ENCODE measurements at regions of chr7 and their contacts with region 1.

Region 1: GRCh38 chr7:35891004-35891830 is 90.4 kb downstream of the SEPTIN7 start:
- DNase-seq: no peak
- CTCF ChIP-seq: no peak

Region 2: GRCh38 chr7:35906191-35906908 is 15.1 kb after region 1 on chr7:
- CTCF ChIA-PET with region 1: interaction called, 25 read pairs
- POLR2A ChIA-PET with region 1: no interaction called
- DNase-seq: peak; percentile 52
- CTCF ChIP-seq: peak; percentile 69